ENCODE measurements at regions of chr2 and their contacts with region 1.

Region 1: DNA sequence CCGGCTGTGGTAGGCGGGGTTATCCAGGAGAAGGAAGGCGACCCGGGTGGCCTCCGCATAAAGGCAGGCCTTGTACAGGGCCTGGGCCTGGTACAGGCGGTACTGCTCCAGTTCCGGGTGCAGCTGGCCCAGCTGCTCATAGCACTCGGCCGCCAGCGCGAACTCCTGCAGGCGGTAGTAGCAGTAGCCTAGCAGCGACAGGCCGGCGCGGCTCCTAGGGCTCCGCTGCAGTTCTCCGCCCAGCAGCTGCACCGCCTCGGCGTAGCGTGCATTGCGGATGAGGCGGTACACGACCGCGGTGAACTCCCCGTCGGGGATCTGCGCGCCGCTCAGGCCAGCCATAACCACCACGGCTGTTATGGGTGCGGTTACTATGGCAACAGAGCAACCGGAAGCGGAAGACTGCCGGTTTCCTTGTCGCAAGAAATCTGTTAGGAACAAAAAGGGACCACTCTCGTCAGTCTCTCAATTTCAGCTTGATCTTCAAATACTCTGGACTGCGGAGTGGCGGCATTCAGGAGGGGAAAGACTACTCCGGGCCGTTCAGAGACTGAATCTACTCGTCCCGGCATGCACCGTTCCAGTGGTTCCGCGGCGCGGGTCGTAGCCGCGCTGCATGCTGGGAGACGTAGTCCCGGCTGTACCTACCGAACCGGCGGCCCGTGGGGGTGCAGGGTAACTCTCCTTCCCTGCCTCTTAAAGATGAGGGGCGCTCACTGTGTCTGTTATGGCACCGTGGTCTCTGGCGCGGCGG is 160.0 kb downstream of the AGPS start:
- DNase-seq: peak; percentile 93
- H3K4me3 Mint-ChIP-seq: peak overlapping the region; percentile 88
- H3K27ac Mint-ChIP-seq: peak overlapping the region; percentile 99
- H3K4me1 Mint-ChIP-seq: peaks cover 8% of the 10 kb centered on the region
- H3K27me3 Mint-ChIP-seq: no peaks in the 10 kb centered on the region

Region 2: GRCh38 chr2:177618255-177619253 is 66.0 kb after region 1 on chr2:
- CTCF ChIA-PET with region 1: interaction called, 4 read pairs
- intact Hi-C with region 1: loop called (anchors 1 kb)
- DNase-seq: peak; percentile 95
- H3K4me3 Mint-ChIP-seq: peak overlapping the region; percentile 93
- H3K27ac Mint-ChIP-seq: peak overlapping the region; percentile 96
- H3K4me1 Mint-ChIP-seq: peaks cover 3% of the 10 kb centered on the region
- H3K27me3 Mint-ChIP-seq: no peaks in the 10 kb centered on the region